AG04450 (cell line): ENCODE measurements at regions of chr20 and their contacts with region 1.

Region 1: DNA sequence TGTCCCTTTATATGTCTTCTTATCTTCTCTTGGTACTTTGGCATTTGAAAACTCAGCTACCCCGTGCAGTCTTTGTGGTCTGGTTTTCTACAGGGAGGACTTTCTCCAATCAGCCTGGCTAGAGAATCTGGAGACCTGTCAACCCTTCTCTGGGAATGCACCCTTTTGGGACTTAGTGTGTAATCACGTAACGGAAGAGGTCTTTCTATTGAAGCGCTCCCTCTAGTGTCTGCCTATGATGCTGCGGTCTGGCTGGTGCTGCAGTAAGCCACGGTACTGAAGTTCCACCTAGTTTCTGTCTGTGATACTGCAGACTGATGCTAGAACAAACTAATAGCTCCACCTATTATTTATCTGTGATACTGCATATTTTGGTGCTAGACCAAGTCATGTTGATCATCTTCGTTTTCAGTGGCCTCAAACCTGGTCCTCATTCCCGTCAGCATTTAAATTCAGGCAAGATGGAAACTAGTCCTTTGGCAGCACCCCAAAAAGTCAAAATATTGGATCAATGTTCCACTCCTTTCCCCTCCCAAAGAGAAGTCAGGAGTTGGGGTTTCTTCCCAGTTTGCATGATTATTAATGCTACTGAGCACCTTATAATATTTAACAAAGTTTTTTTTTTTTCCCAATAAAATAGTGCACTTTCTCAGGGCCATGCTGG is 12.5 kb upstream of the SIRPB2 start:
- DNase-seq: peak; percentile 75
- H3K4me3 ChIP-seq: no peak overlapping the region
- H3K27ac ChIP-seq: no peak overlapping the region
- H3K27me3 ChIP-seq: peaks cover 11% of the 10 kb centered on the region
- CTCF ChIP-seq: peak; percentile 100

Region 2: GRCh38 chr20:454946-455345 is 1048.8 kb before region 1 on chr20:
- CTCF ChIA-PET with region 1: no interaction called
- POLR2A ChIA-PET with region 1: no interaction called
- DNase-seq: no peak
- H3K4me3 ChIP-seq: no peak overlapping the region
- H3K27ac ChIP-seq: no peak overlapping the region
- H3K27me3 ChIP-seq: no peaks in the 10 kb centered on the region
- CTCF ChIP-seq: no peak

Region 3: GRCh38 chr20:1423625-1424106 is 80.0 kb before region 1 on chr20:
- CTCF ChIA-PET with region 1: no interaction called
- POLR2A ChIA-PET with region 1: no interaction called
- DNase-seq: no peak
- H3K4me3 ChIP-seq: no peak overlapping the region
- H3K27ac ChIP-seq: no peak overlapping the region
- H3K27me3 ChIP-seq: no peaks in the 10 kb centered on the region
- CTCF ChIP-seq: peak; percentile 10; the same call in 1 of the 2 replicates

Region 4: GRCh38 chr20:1437235-1437904 is 66.3 kb before region 1 on chr20:
- CTCF ChIA-PET with region 1: interaction called, 13 read pairs
- POLR2A ChIA-PET with region 1: no interaction called
- DNase-seq: peak; percentile 72
- H3K4me3 ChIP-seq: no peak overlapping the region
- H3K27ac ChIP-seq: no peak overlapping the region
- H3K27me3 ChIP-seq: no peaks in the 10 kb centered on the region
- CTCF ChIP-seq: peak; percentile 89

Region 5: GRCh38 chr20:1466211-1467081 is 37.2 kb before region 1 on chr20 and contains the start of gene NSFL1C:
- CTCF ChIA-PET with region 1: interaction called, 50 read pairs
- POLR2A ChIA-PET with region 1: no interaction called
- DNase-seq: peak; percentile 85
- H3K4me3 ChIP-seq: peak within 1 kb of the TSS; percentile 88
- H3K27ac ChIP-seq: peak within 1 kb of the TSS; percentile 49
- H3K27me3 ChIP-seq: peaks cover 4% of the 10 kb centered on the region
- CTCF ChIP-seq: peak; percentile 79
- polyA plus RNA-seq, gene NSFL1C: 23.0 and 23.4 TPM in 2 replicates

Region 6: DNA sequence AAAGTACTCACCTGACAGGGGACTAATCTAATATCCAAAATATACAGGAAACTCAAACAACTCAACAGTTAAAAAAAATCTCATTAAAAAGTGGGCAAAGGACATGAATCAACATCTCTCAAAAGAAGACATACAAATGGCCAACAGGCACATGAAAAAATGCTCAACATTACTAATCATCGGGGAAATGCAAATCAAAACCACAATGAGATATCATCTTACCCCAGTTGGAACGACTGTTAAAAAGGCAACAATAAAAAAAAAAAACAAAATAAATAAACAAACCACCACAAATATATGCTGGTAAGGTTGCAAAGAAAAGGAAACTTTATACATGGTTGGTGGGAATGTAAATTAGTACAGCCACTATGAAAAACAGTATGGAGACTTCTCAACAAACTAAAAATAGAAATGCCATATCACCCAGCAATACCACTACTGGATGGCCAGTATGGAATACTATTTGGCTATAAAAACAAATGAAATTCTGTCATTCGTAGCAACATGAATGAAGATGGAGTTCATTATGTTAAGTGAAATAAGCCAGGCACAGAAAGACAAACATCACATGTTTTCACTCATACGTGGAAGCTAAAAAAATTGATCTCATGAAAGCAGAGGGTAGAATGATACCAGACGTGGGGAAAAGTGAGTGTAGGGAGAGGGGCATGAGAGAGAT is 19.1 kb before region 1 on chr20:
- CTCF ChIA-PET with region 1: interaction called, 41 read pairs
- POLR2A ChIA-PET with region 1: no interaction called
- DNase-seq: no peak
- H3K4me3 ChIP-seq: no peak overlapping the region
- H3K27ac ChIP-seq: no peak overlapping the region
- H3K27me3 ChIP-seq: peaks cover 5% of the 10 kb centered on the region
- CTCF ChIP-seq: no peak

Region 7: DNA sequence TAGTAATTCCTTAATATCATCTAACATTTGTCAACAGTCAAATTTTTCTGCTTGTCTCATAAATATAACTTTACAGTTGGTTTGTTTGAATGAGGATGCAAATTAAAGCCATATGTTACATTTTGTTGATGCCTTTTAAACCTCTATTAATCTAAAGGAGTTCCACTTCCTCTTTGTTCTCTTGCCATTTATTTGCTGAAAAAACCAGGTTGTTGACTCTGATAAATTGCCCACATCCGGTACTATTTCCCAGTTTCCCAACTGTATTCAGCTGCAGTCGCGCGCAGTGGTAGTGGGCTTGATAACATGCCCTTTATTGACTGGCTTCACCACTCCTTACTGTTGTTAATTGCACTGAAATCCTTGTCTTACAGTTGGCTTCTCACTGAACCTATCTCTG is 20.3 kb after region 1 on chr20:
- CTCF ChIA-PET with region 1: interaction called, 31 read pairs
- POLR2A ChIA-PET with region 1: no interaction called
- DNase-seq: no peak
- H3K4me3 ChIP-seq: no peak overlapping the region
- H3K27ac ChIP-seq: no peak overlapping the region
- H3K27me3 ChIP-seq: peaks cover 3% of the 10 kb centered on the region
- CTCF ChIP-seq: no peak